Activated T-helper 1 cell treated with anti-CD3 and anti-CD28 coated beads, Interleukin-12 subunit alpha, Interleukin-12 subunit beta, Interleukin-2, Interleukin-4 antibody, amounts not matched to agents 30 ng/mL and 10 ng/mL and 1 ng/mL, durations not matched to agents 14 hours and 24 hours and 36 hours (primary cell): ENCODE measurements at regions of chr4 and their contacts with region 1.

Region 1: GRCh38 chr4:147518846-147519767 is 38.2 kb downstream of the EDNRA start:
- DNase-seq: peak; percentile 14
- H3K4me3 Mint-ChIP-seq: no peak overlapping the region
- H3K27ac Mint-ChIP-seq: no peak overlapping the region
- H3K4me1 Mint-ChIP-seq: no peaks in the 10 kb centered on the region
- H3K27me3 Mint-ChIP-seq: peaks cover 8% of the 10 kb centered on the region

Region 2: DNA sequence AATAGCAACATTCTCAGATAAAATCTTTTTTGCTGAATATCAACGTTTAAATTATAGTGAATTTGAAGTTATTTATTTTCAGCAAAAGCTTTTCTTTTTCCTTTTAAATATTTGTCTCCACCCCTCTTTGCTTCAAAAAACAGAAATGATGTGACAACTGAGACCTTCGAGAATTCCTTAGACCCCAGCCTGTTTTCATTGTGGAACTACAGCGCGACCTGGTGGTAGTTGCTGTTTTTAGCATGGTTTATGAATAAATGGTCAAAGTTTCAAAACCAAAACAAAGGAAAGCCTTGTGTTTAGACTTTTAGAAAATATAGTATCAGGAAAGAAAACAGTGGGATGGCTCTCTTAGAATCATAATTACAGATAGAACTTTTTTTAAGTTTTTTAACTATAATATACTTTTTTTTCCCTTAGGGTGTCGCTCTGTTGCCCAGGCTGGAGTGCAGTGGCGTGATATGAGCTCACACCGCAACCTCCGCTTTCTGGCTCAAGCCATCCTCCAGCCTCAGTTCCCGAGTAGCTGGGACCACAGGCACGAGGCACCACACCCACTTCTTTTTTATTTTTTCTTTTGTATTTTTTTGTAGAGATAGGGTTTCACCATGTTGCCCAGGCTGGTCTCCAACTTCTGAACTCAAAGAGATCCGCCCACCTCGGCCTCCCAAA is 71.3 kb after region 1 on chr4:
- intact Hi-C with region 1: loop called (anchors 1 kb)
- DNase-seq: no peak
- H3K4me3 Mint-ChIP-seq: no peak overlapping the region
- H3K27ac Mint-ChIP-seq: no peak overlapping the region
- H3K4me1 Mint-ChIP-seq: no peaks in the 10 kb centered on the region
- H3K27me3 Mint-ChIP-seq: peaks cover 15% of the 10 kb centered on the region

Region 3: DNA sequence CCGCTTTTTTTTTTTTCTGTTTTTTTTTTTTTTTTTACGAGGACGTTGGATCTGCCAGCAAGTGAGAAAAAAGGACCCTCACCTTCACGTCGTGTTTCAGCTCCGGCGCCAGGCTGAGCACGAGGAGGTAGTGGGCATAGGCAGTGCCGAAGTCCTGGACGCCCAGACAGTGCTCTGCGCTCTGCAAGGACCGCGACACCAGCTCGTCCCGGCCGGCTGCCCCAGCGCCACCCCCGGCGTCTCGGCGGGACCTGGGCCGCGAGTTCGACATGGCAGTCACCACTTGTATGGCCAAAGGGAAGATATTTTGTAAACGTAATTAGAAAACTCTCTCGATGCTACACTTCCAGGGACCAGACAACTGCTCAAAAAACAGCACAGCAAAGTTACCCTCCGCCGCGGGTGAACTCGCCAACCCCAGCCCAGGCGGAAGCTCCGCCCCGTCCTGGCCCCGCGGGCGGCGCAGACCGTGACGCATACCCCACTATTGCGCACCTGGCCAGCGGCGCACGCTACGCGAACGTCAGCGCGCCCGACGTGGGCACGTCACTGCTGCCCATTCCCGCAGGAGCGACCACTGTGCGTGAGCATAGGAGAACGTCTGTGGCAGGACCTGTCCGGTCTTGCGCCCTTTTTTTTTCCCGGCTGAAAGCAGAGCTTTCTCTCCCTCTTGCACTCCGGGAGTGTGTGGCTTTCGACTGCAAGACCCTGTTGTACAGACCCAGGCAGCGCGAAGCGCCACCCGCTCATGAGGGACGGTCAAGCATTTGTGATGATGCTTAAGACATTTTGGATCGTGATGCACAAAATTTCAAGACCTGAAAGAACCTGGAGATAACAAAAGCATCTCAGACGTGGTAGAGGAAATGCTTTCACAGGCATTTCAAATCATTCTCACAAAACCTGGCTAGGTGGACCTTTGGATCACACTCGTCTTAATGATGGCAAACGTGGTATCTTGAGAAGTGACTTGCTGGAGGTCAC is 164.9 kb after region 1 on chr4 and contains the start of gene PRMT9:
- intact Hi-C with region 1: loop called (anchors 10 kb)
- DNase-seq: peak; percentile 85
- H3K4me3 Mint-ChIP-seq: peak within 1 kb of the TSS; percentile 92
- H3K27ac Mint-ChIP-seq: peak within 1 kb of the TSS; percentile 92
- H3K4me1 Mint-ChIP-seq: peaks cover 30% of the 10 kb centered on the region
- H3K27me3 Mint-ChIP-seq: peaks cover 9% of the 10 kb centered on the region
- total RNA-seq, gene PRMT9: 6.8 and 7.4 TPM in 2 replicates

Region 4: GRCh38 chr4:147707865-147708672 is 189.0 kb after region 1 on chr4:
- intact Hi-C with region 1: loop called (anchors 2 kb)
- DNase-seq: peak; percentile 17
- H3K4me3 Mint-ChIP-seq: no peak overlapping the region
- H3K27ac Mint-ChIP-seq: no peak overlapping the region
- H3K4me1 Mint-ChIP-seq: no peaks in the 10 kb centered on the region
- H3K27me3 Mint-ChIP-seq: peaks cover 4% of the 10 kb centered on the region